ENCODE measurements at regions of chr12 and their contacts with region 1.

Region 1: DNA sequence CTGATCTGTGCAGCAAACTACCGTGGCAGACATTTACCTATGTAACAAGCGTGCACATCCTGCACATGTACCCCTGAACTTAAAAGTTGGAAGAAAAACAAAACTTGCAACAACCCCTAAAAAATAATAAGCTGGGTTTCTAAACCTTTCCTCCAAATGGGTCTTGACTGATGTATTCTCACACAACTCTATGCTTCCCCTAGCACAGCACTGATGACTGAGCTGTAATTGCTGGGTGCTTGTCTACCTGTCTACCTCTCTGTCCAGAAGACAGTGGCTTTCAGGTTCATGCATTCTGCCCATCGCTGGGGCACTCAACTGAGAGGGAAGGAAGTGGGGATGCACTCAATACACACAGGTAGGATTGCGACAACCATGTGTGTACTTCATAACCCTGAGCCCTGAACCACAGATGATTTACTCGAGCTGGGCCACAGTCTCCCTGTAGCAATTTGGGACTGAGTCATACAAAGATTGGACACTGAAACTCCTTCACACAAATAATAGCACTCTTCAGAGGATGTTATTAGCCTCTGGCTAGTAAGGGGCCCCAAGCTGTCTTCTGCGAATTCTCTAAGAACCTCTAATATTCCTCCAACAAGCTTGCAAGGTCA is 44.8 kb upstream of the TMPO start:
- DNase-seq: no peak
- H3K4me3 ChIP-seq: no peak overlapping the region
- H3K27ac ChIP-seq: no peak overlapping the region
- H3K27me3 ChIP-seq: peaks cover 9% of the 10 kb centered on the region
- CTCF ChIP-seq: no peak

Region 2: GRCh38 chr12:97960754-97961608 is 509.6 kb before region 1 on chr12:
- CTCF ChIA-PET with region 1: no interaction called
- POLR2A ChIA-PET with region 1: interaction called, 14 read pairs
- DNase-seq: no peak
- H3K4me3 ChIP-seq: no peak overlapping the region
- H3K27ac ChIP-seq: no peak overlapping the region
- H3K27me3 ChIP-seq: no peaks in the 10 kb centered on the region
- CTCF ChIP-seq: 0 out of 2 replicates have a peak, but pooled peaks have one; percentile 9

Region 3: DNA sequence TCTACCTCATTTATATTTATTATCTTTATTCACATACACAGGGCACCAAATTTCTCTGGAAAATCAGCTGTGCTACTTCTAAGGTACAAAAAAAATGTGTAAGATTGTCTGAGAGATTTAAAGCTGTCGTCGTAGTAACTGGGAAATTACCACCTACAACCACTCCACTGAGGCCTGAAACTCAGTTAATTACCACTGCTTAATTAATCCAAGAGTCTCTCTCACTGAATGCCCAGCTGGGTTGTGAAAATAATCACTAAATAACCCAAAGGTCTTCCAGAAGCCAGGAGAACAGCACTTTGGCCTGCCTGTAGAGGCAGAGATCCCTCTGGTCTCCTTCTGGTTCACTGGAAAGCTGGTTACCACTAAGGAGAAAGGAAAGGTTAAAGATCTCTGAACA is 162.4 kb before region 1 on chr12:
- CTCF ChIA-PET with region 1: no interaction called
- POLR2A ChIA-PET with region 1: no interaction called
- DNase-seq: no peak
- H3K4me3 ChIP-seq: no peak overlapping the region
- H3K27ac ChIP-seq: no peak overlapping the region
- H3K27me3 ChIP-seq: no peaks in the 10 kb centered on the region
- CTCF ChIP-seq: no peak

Region 4: DNA sequence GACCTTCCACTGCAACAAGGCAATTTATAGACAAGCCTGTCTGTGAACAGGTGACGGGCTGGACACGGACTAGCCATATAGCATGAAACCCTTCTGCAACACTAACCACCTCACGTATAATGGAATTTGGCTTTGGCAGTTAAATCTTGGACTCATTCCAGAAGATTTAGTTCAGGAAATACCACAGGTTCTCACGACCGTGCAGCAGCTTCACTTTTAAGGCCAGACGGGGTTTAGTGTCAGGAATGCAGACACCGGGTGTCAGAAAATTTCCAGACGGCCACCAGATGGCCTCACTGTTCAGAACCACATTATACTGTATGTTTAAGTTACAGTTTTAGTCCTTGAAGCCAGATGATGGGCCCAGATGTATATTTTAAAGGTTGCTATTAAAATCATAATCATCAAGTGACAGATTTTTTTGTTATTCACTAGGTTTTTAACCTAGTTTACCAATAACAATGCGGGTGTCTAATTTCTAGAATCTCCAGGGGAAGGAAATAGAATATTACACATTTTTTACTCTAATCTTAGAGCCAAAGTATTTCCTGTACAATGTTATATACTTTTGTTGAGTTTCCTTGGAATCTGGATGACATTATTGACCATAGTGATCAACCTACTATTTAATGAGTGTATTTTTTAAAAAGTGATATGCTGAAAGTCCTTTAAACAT is 45.7 kb before region 1 on chr12:
- CTCF ChIA-PET with region 1: no interaction called
- POLR2A ChIA-PET with region 1: no interaction called
- DNase-seq: peak; percentile 43
- H3K4me3 ChIP-seq: no peak overlapping the region
- H3K27ac ChIP-seq: no peak overlapping the region
- H3K27me3 ChIP-seq: no peaks in the 10 kb centered on the region
- CTCF ChIP-seq: peak; percentile 73

Region 5: DNA sequence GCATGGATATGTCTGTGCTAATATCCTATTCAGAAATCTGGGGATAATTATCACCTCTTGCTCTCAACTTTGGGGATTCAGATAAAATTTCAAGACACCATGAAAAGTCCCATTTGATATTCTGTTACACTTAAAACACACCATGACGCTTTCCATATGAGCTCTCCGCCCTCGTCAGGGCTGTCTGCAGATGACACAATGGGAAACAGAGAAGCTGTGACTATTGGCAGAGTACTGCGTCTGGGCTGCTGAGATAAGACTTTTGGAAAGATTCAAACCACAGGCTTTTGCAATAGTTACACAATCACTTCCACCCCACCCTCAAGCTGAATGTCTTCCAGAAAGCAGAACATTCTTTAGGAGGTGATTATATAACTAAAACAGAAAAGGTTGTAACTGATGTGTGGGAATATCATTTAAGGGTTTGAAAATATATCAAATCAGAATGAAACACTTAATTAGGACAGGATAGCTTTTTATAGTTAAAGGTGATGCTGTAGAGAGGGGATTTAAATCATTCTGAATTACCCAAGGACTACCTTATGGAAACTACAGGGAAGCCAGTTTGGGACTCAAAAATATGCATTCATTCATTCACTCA is 30.5 kb before region 1 on chr12:
- CTCF ChIA-PET with region 1: interaction called, 4 read pairs
- POLR2A ChIA-PET with region 1: interaction called, 15 read pairs
- DNase-seq: peak; percentile 66
- H3K4me3 ChIP-seq: no peak overlapping the region
- H3K27ac ChIP-seq: no peak overlapping the region
- H3K27me3 ChIP-seq: peaks cover 4% of the 10 kb centered on the region
- CTCF ChIP-seq: no peak

Measured in AG04450 (cell line).